ENCODE measurements at regions of chr19 and their contacts with region 1.

Region 1: DNA sequence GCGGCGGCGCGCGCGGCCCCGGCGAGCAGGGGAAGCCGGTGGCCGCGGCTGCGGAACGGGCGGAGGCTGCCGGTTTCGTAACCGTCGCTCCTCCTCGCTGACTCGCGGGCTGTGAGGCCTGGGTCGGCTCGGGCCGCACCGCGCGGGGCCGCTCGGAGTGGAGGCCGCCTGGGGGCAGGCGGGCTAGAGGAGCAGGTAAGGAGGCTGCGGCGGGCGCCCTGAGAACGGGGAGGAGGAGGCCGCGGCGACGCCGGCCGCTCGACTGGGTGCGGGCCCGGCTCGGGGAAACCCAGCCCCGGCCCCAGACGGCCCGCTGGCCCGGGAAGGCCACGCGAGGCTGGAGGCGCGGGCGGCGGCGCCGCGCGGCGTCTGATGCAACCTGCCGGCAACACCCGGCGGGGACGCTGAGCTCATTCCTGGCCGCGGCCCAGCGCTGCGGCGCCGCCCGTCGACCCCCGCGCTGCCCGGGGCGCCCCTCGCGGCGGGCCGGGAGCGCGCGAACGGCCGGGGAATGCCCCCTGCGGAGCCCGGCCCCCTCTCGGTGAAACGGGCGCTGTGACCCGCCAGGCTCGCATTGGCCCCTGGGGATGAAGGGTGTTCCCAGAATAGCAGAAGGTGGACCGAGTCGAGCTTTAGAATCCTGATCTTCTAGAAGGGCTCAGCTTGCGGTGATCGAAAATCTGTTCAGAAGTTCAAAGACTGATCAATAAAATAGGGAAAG is at the start of gene CEBPG:
- DNase-seq: peak; percentile 64
- ATAC-seq: peak; percentile 45
- H3K4me3 ChIP-seq: peak within 1 kb of the TSS; percentile 96
- H3K27ac ChIP-seq: peak within 1 kb of the TSS; percentile 98
- H3K4me1 ChIP-seq: peaks cover 8% of the 10 kb centered on the region
- H3K27me3 ChIP-seq: 0 out of 2 replicates have a peak, but pooled peaks cover 5% of the 10 kb centered on the region
- CTCF ChIP-seq: peak; percentile 29; the same call in 1 of the 2 replicates
- POLR2A ChIP-seq: peak; percentile 72; the same call in 1 of the 2 replicates
- RAD21 ChIP-seq: no peak
- total RNA-seq, gene CEBPG: 14.3 and 21.1 TPM in 2 replicates

Region 2: GRCh38 chr19:33302175-33302973 is 71.5 kb before region 1 on chr19 and contains the start of gene CEBPA:
- CTCF ChIA-PET with region 1: no interaction called
- POLR2A ChIA-PET with region 1: no interaction called
- dilution Hi-C with region 1: no loop called
- in situ Hi-C with region 1: no loop called
- intact Hi-C with region 1: loop called (anchors 5 kb)
- DNase-seq: peak; percentile 72
- ATAC-seq: peak; percentile 92
- H3K4me3 ChIP-seq: peak within 1 kb of the TSS; percentile 40
- H3K27ac ChIP-seq: no peak within 1 kb of the TSS
- H3K4me1 ChIP-seq: no peaks in the 10 kb centered on the region
- H3K27me3 ChIP-seq: peaks cover 66% of the 10 kb centered on the region
- CTCF ChIP-seq: peak; percentile 66
- POLR2A ChIP-seq: peak; percentile 57; the same call in 1 of the 2 replicates
- RAD21 ChIP-seq: peak; percentile 42
- total RNA-seq, gene CEBPA: under 0.01 TPM in 1 of 2 replicates, not detected in the other

Measured in IMR-90 (cell line).